ENCODE measurements at regions of chr10 and their contacts with region 1.

Region 1: DNA sequence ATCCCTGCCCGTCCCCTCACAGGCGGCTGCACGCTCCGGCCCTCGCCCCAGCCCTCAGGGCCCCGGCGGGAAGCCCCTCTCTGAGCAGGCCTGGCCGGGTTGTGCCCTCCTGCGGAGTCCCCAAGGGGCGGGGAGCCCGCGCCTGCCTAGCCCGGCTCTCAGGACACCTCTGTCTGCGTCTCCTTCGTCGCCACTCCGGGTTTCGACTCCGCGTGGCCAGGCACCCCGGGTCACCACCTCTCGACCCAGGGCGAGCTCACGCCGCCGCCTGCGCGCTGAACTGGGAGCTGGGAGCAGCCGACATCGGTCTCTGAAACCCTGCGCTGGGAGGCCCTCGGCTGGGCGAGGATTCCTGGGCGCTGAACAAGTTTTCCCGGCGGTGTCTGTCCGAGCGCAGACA is 6.2 kb upstream of the OGDHL start:
- DNase-seq: no peak
- H3K4me3 ChIP-seq: no peak overlapping the region
- H3K27ac ChIP-seq: no peak overlapping the region
- H3K4me1 ChIP-seq: no peaks in the 10 kb centered on the region
- H3K27me3 ChIP-seq: peaks cover 0 to 50% of the 10 kb centered on the region in 2 donors
- CTCF ChIP-seq: no peak
- POLR2A ChIP-seq: no peak

Region 2: DNA sequence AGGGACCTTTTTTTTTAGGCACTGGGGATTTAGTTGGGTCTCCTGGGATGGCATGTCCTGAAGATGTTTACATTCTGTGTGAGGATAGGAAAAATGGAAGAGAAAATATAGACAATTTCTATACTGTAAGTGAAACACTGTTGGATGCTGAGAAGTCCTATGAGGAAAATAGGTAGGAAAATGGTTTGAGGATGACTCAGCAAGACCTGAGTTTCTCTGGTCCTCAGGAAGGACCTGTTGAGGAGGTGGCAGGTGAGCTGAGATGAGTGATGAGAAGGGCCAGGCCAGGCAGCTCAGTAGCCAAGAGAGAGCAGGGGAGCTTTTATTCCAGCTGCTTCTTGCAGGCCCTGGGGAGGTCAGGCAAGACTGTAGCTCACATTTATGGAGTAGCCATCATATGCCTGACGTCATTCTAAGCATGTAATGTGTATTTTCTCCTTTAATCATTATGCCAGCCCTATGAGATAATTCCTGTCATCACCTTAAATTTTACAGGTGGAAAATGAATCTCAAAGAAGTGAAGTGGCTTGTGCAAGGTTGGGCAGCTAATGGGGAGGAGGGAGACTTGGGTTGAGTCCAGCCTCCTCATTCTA is 809.6 kb before region 1 on chr10:
- intact Hi-C with region 1: no loop called
- DNase-seq: no peak
- H3K4me3 ChIP-seq: no peak overlapping the region
- H3K27ac ChIP-seq: no peak overlapping the region
- H3K4me1 ChIP-seq: no peaks in the 10 kb centered on the region
- H3K27me3 ChIP-seq: no peaks in the 10 kb centered on the region
- CTCF ChIP-seq: no peak
- POLR2A ChIP-seq: no peak

Region 3: DNA sequence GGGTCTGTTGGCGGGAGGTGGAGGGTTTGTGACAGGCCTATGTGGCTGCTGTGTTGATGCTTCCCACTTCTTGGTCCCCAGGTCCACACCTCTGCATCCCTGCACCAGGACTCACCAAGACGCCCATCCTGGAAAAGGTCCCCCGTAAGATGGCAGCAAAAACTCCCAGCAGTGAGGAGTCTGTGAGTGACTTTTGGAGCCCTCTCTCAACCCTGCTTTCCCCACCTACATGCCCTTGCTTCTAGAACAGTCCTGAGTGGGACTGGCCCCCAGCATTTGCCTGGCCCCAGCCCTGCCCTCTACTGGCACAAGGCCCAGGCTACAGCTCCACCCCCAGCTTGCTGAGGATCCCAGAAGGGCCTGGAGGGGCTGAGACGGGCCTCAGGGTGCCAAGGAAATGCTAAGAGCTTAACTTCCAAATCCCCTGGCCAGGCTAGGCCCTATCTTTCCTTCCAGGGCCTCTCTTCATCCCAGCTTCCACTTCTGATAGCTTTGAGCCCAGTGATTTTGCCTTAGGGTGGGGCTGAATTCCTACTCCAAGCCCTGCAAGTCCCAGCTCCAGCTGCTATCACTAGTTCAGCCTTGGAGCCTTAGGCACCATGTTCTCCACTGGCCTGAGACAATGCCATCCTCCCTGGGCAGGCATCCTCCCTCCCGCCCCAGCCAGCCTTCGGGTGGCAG is 151.8 kb before region 1 on chr10:
- intact Hi-C with region 1: loop called (anchors 1 kb)
- DNase-seq: peak in 1 of 2 donors; percentile 37
- H3K4me3 ChIP-seq: no peak overlapping the region
- H3K27ac ChIP-seq: no peak overlapping the region
- H3K4me1 ChIP-seq: no peaks in the 10 kb centered on the region
- H3K27me3 ChIP-seq: peaks cover 0 to 91% of the 10 kb centered on the region in 2 donors
- CTCF ChIP-seq: no peak
- POLR2A ChIP-seq: no peak

Region 4: DNA sequence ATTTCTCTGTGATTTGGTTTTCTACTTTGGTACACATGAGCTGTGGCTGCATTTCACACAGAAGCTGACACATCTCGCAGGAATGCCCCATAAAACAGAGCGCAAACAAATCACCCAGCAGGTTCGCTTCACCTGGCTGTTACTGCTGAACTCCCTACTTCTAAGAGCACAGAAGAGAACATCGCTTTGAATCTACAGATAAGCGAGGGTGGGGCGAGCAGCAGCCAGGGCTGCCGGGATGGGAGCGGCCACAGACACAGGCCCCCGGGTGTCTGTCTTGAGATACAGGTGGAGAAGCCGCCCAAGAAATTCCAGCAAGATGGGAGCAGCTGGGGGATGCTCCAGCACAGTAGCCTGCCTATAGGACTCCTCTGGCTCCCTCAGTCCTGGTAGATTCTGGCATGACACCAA is 33.7 kb before region 1 on chr10:
- intact Hi-C with region 1: loop called (anchors 2 kb)
- DNase-seq: peak in 1 of 2 donors; percentile 6
- H3K4me3 ChIP-seq: no peak overlapping the region
- H3K27ac ChIP-seq: no peak overlapping the region
- H3K4me1 ChIP-seq: no peaks in the 10 kb centered on the region
- H3K27me3 ChIP-seq: no peaks in the 10 kb centered on the region
- CTCF ChIP-seq: no peak
- POLR2A ChIP-seq: no peak

Region 5: DNA sequence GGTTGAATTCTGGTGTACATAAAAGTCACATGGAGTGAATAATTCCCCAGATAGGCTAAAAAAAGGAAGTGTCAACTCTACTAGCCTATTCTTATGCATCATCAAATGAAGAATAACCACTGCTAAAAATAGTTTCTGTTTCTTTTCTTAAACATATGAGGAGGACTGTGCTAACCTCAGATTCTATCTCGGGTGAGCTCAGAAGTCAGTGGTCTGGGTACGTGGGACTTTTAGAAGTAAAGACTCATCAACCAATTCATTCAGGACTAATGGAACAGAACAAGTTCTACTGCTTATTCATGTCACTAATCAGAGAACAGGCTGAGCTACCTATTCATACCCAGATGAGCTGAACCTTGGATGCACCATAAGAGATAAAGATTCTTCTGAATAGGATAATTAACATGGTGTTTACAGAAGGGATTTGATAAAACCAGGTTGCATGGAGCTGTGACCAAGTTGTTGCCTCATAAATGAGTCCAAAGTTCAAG is 492.5 kb after region 1 on chr10:
- intact Hi-C with region 1: no loop called
- DNase-seq: no peak
- H3K4me3 ChIP-seq: no peak overlapping the region
- H3K27ac ChIP-seq: no peak overlapping the region
- H3K4me1 ChIP-seq: no peaks in the 10 kb centered on the region
- H3K27me3 ChIP-seq: no peaks in the 10 kb centered on the region
- CTCF ChIP-seq: no peak
- POLR2A ChIP-seq: no peak